CD8-positive, alpha-beta memory T cell (primary cell): ENCODE measurements at regions of chr1 and their contacts with region 1.

Region 1: DNA sequence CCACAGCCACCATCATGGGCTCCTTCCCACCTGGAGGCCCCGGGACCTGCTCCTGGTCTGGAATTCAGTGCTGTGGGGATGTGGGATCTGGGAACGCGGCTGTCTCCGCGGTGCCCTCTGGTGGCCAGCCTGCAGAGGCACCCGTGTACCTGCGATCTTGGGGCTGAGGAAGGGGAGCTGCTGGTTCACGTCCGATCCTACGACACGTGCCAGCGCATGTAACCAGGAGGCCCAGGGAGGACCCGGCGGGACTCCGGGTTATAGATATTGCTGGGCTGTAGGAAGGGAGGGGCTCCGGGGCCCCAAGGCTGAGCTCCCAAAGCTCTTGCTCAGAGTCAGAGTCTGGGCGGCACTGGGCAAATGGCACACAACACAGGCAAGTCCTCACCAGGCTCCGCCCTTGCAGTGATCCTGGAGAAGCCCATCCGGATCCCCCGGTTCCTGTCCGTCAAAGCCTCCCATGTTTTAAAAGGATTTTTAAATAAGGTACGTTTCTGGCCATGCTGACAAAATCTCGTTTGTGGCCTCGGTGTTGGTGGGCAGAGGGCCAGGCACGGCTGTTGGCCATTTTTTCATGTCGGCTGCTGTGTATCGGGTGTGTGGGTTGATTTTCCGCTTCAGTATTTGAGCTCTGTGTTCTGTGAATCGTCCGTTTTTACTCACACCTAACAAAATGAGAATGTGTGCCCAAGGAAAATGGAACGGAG is 20.1 kb downstream of the FAAP20 start:
- DNase-seq: peak in 2 of 5 donors; percentile 17 to 24
- H3K4me3 ChIP-seq: no peak overlapping the region
- H3K4me3 Mint-ChIP-seq: peak overlapping the region in 1 of 7 donors; percentile 29
- H3K27ac ChIP-seq: no peak overlapping the region
- H3K27ac Mint-ChIP-seq: peak overlapping the region in 2 of 8 donors; percentile 15 to 47
- H3K4me1 ChIP-seq: peaks cover 6% of the 10 kb centered on the region
- H3K4me1 Mint-ChIP-seq: peaks cover 0 to 12% (median 9%) of the 10 kb centered on the region in 3 donors
- H3K27me3 ChIP-seq: no peaks in the 10 kb centered on the region
- H3K27me3 Mint-ChIP-seq: no peaks in the 10 kb centered on the region

Region 2: GRCh38 chr1:2098855-2099721 is 75.4 kb before region 1 on chr1:
- CTCF ChIA-PET with region 1: no interaction called
- POLR2A ChIA-PET with region 1: no interaction called
- DNase-seq: no peak
- H3K4me3 ChIP-seq: no peak overlapping the region
- H3K4me3 Mint-ChIP-seq: no peak overlapping the region
- H3K27ac ChIP-seq: no peak overlapping the region
- H3K27ac Mint-ChIP-seq: peak overlapping the region in 1 of 8 donors; percentile 41
- H3K4me1 ChIP-seq: no peaks in the 10 kb centered on the region
- H3K4me1 Mint-ChIP-seq: peaks cover 0 to 10% (median 0%) of the 10 kb centered on the region in 3 donors
- H3K27me3 ChIP-seq: no peaks in the 10 kb centered on the region
- H3K27me3 Mint-ChIP-seq: peaks cover 0 to 3% of the 10 kb centered on the region in 2 donors

Region 3: GRCh38 chr1:2148691-2149090 is 25.8 kb before region 1 on chr1:
- CTCF ChIA-PET with region 1: interaction called, 21 read pairs
- POLR2A ChIA-PET with region 1: interaction called, 6 read pairs
- DNase-seq: peak; percentile 45 to 82 (median 78)
- H3K4me3 ChIP-seq: peak overlapping the region; percentile 50
- H3K4me3 Mint-ChIP-seq: no peak overlapping the region
- H3K27ac ChIP-seq: peak overlapping the region; percentile 40
- H3K27ac Mint-ChIP-seq: no peak overlapping the region
- H3K4me1 ChIP-seq: peaks cover 38% of the 10 kb centered on the region
- H3K4me1 Mint-ChIP-seq: peaks cover 7 to 27% (median 19%) of the 10 kb centered on the region in 3 donors
- H3K27me3 ChIP-seq: no peaks in the 10 kb centered on the region
- H3K27me3 Mint-ChIP-seq: no peaks in the 10 kb centered on the region

Region 4: DNA sequence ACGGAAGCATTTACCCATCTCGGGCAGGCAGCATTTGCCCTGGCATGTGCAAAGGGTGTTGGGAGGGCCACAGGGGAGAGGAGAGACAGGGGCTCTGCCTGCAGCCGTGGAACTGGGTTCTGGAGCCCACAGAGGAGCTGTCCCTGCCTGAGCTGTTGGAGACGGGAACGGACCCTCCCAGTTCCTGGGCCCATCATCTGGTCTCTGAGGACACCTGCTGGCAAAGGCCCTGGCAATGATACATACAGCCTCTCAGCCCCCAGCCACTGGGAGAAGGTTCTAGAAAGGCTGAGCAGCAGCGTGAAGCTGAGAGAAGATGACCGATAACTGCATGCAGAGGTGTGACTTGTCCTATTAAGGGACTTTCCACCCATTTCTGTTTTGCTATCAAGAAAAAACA is 11.3 kb before region 1 on chr1:
- CTCF ChIA-PET with region 1: interaction called, 20 read pairs
- POLR2A ChIA-PET with region 1: no interaction called
- DNase-seq: peak in 1 of 5 donors; percentile 33
- H3K4me3 ChIP-seq: no peak overlapping the region
- H3K4me3 Mint-ChIP-seq: peak overlapping the region in 1 of 7 donors; percentile 44
- H3K27ac ChIP-seq: no peak overlapping the region
- H3K27ac Mint-ChIP-seq: peak overlapping the region in 2 of 8 donors; percentile 24 to 73
- H3K4me1 ChIP-seq: no peaks in the 10 kb centered on the region
- H3K4me1 Mint-ChIP-seq: peaks cover 10 to 15% (median 13%) of the 10 kb centered on the region in 3 donors
- H3K27me3 ChIP-seq: no peaks in the 10 kb centered on the region
- H3K27me3 Mint-ChIP-seq: no peaks in the 10 kb centered on the region